PC-9 (cell line): ENCODE measurements at regions of chr2 and their contacts with region 1.

Region 1: GRCh38 chr2:119223521-119224390 is at the start of gene STEAP3:
- DNase-seq: peak; percentile 79 to 94
- H3K4me3 ChIP-seq: peak within 1 kb of the TSS; percentile 89
- H3K27ac ChIP-seq: peak within 1 kb of the TSS; percentile 21
- H3K4me1 ChIP-seq: peaks cover 30% of the 10 kb centered on the region
- H3K27me3 ChIP-seq: no peaks in the 10 kb centered on the region
- CTCF ChIP-seq: no peak
- total RNA-seq, gene STEAP3: 23.0 and 26.3 TPM in 2 replicates

Region 2: GRCh38 chr2:119126650-119127049 is 97.1 kb before region 1 on chr2:
- CTCF ChIA-PET with region 1: no interaction called
- POLR2A ChIA-PET with region 1: no interaction called
- intact Hi-C with region 1: no loop called
- DNase-seq: peak in 1 of 2 experiments; percentile 7
- H3K4me3 ChIP-seq: no peak overlapping the region
- H3K27ac ChIP-seq: no peak overlapping the region
- H3K4me1 ChIP-seq: no peaks in the 10 kb centered on the region
- H3K27me3 ChIP-seq: no peaks in the 10 kb centered on the region
- CTCF ChIP-seq: peak; percentile 74

Region 3: DNA sequence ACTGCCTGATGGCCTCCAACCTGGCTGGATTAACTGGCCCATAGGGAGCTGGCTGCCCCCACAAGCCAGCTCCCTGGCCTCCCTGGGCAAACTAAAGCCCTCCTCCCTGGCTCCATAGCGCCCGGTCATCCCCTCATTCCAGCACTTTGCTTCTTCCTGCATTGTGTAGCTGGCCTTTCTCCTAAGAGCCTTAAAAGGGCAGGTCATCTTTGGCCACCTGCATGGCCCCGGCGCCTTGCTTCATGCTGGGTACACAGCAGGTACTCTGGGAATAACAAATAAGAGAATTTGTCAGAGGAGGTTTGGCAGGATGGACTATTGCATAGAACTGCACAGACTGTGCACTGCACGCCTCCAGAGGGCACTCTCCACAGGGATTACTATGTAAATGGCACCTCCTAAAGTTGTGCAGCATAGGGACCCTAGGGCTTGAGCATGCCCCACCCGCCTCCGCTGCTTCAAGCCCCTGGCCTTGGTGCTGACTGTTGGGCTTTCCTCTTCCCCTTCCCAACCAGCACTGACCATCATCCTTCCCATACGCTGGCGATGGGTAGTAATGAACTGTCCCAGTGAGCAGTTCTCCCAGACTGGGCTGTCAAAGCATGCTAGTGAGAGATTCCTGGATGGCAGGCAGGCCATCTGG is 10.7 kb after region 1 on chr2:
- CTCF ChIA-PET with region 1: no interaction called
- POLR2A ChIA-PET with region 1: interaction called, 19 read pairs
- intact Hi-C with region 1: no loop called
- DNase-seq: no peak
- H3K4me3 ChIP-seq: no peak overlapping the region
- H3K27ac ChIP-seq: no peak overlapping the region
- H3K4me1 ChIP-seq: peaks cover 53% of the 10 kb centered on the region
- H3K27me3 ChIP-seq: no peaks in the 10 kb centered on the region
- CTCF ChIP-seq: peak; percentile 41; the same call in 1 of the 2 replicates

Region 4: GRCh38 chr2:119240311-119241202 is 16.8 kb after region 1 on chr2:
- CTCF ChIA-PET with region 1: no interaction called
- POLR2A ChIA-PET with region 1: no interaction called
- intact Hi-C with region 1: loop called (anchors 2 kb)
- DNase-seq: peak; percentile 79 to 93
- H3K4me3 ChIP-seq: no peak overlapping the region
- H3K27ac ChIP-seq: no peak overlapping the region
- H3K4me1 ChIP-seq: peaks cover 25% of the 10 kb centered on the region
- H3K27me3 ChIP-seq: no peaks in the 10 kb centered on the region
- CTCF ChIP-seq: no peak

Region 5: GRCh38 chr2:119264781-119265692 is 41.3 kb after region 1 on chr2:
- CTCF ChIA-PET with region 1: interaction called, 3 read pairs
- POLR2A ChIA-PET with region 1: no interaction called
- intact Hi-C with region 1: loop called (anchors 2 kb)
- DNase-seq: peak in 1 of 2 experiments; percentile 67
- H3K4me3 ChIP-seq: no peak overlapping the region
- H3K27ac ChIP-seq: no peak overlapping the region
- H3K4me1 ChIP-seq: no peaks in the 10 kb centered on the region
- H3K27me3 ChIP-seq: no peaks in the 10 kb centered on the region
- CTCF ChIP-seq: peak; percentile 95

Region 6: DNA sequence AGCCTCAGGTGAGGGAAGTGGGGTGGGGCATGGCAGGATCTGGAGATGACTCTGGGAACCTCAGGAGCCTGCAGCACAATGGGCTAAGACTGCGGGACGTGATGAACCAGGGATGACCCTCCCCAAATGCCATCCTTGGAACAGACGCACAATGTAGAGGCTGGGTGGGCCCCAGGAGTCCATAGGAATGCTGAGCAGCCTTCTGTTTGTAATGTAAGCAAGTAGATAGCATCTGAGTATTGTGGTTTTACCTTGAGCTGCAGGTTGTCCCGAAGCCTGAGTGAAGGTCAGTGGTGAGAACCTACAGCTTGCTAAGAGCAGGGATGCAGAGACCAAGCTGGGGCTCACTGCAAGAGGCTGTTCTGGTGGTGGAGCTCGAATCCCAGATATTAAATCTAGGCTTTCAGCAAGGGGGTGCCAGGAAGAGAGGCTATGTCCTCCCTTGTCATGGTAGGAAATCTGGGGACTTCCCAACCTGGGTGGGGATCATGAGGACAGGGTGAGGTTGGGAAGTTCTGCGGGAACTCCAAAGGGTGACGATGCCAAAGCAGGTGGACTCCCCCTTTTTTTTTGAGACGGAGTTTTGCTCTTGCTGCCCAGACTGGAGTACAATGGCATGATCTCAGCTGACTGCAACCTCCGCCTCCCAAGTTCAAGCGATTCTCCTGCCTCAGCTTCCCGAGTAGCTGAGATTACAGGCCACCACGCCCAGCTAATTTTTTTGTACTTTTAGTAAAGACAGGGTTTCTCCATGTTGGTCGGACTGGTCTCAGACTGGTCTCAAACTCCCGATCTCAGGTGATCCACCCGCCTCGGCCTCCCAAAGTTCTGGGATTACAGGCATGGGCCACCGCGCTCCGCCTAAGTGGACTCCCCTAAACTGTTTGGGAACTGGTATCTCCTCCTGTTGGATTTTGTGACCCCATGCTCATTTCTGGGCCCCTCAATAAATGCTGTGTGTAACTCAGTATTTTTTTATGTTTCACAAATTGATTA is 295.0 kb after region 1 on chr2:
- CTCF ChIA-PET with region 1: interaction called, 16 read pairs
- POLR2A ChIA-PET with region 1: no interaction called
- intact Hi-C with region 1: no loop called
- DNase-seq: no peak
- H3K4me3 ChIP-seq: no peak overlapping the region
- H3K27ac ChIP-seq: no peak overlapping the region
- H3K4me1 ChIP-seq: no peaks in the 10 kb centered on the region
- H3K27me3 ChIP-seq: peaks cover 33% of the 10 kb centered on the region; the same call in 1 of the 2 replicates
- CTCF ChIP-seq: no peak